Activated CD4-positive, alpha-beta memory T cell treated with anti-CD3 and anti-CD28 coated beads, Interleukin-2, amount 10 ng/mL, durations not matched to agents 7 days and 5 days (primary cell): ENCODE measurements at regions of chr12 and their contacts with region 1.

Region 1: DNA sequence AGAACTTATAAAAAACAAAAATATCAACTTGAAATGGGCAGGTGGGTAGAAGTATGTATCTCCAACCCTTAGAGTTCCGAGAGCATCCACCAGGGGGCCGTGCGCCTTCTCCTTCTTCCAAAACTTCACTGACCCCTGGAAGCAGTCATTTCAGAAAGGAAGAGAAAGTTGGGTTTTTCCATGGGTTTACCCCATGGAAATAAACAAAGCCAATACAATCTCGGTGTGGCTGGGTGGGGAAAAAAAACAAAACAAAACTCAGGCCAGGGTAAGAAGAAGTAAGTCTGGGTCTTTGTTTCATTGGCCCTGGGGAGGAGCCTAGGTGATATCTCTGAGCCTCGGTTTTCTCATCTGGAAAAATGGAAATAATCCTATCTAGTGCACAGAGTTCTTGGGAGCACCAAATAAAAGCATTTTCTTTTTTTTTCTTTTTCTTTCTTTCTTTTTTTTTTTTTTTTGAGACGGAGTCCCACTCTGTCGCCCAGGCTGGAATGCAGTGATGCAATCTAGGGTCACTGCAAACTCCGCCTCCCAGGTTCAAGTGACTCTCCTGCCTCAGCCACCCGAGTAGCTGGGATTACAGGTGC is 33.6 kb upstream of the HNF1A start:
- DNase-seq: peak; percentile 67
- H3K4me3 Mint-ChIP-seq: no peak overlapping the region
- H3K27ac Mint-ChIP-seq: no peak overlapping the region
- H3K4me1 Mint-ChIP-seq: peaks cover 4% of the 10 kb centered on the region
- H3K27me3 Mint-ChIP-seq: no peaks in the 10 kb centered on the region

Region 2: DNA sequence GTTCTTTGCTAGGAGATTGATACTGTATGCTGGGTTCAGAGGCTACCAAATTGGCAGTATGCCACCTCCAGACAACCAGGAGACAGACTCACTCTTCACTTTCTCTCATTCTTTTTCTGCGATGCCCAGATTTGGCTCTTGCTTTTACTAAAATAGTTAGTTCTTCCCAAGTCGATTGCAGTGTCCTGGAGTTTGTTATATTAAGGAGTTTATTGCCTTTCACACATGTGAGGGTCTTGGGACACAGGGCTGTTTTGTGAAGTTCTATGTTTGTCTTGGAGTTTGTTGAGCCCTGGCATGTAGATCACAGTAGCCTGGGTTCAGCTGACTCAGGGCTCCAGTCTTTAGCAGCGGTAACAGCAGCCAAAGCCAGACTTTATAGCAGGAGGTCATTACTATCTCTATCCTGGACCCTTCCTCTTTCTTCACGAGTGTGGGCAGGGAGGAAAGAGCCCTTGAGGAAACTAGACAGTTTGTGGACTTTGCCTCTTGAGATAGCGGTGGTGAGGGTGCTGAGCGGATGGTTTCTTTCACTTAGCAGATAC is 256.1 kb before region 1 on chr12:
- CTCF ChIA-PET with region 1: no interaction called
- POLR2A ChIA-PET with region 1: no interaction called
- DNase-seq: no peak
- H3K4me3 Mint-ChIP-seq: peak overlapping the region; percentile 82
- H3K27ac Mint-ChIP-seq: peak overlapping the region; percentile 56
- H3K4me1 Mint-ChIP-seq: peaks cover 73% of the 10 kb centered on the region
- H3K27me3 Mint-ChIP-seq: no peaks in the 10 kb centered on the region

Region 3: DNA sequence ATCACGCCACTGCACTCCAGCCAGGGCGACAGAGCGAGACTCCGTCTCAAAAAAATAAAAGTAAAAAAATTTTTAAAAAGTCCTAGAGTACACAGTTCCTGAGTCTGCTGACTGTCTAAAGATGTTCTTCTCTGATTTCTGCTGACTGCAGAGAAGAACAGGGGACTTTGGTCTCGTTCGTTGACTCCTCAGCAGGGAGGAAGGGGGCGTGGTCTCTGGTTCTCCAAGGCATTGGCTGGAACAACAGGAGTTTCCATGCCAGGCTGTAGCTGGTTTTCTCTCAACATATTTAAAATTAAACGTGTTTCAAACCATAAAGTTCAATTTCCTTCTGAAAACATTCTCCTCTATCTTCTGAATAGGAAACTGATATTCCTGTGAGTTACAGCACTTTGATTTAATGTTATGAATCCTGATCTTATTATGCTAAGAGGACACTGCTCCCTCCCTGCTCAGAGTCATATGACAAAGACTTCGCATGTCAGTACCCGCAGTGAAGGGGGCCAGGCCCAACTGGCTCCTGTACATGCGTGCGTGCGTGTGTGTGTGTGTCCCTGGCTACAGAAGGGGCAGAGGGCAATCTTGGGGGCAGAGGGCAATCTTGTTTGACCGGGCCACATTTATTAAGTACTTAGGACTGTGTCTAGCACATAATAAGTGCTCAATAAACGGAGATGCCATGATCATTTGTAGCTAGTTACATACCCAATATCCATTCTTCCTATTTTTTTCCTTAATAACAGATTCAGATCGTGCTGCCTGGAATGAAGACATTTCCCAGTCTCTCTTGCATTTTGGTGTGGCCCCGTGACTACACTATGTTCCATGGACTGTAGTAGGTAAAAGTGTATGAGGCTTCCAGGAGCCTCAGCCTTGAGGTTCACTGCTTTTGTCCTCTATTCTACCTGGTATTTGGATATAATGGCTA is 17.1 kb after region 1 on chr12:
- CTCF ChIA-PET with region 1: interaction called, 10 read pairs
- POLR2A ChIA-PET with region 1: no interaction called
- DNase-seq: no peak
- H3K4me3 Mint-ChIP-seq: no peak overlapping the region
- H3K27ac Mint-ChIP-seq: no peak overlapping the region
- H3K4me1 Mint-ChIP-seq: peaks cover 26% of the 10 kb centered on the region
- H3K27me3 Mint-ChIP-seq: no peaks in the 10 kb centered on the region

Region 4: GRCh38 chr12:120971299-120972179 is 26.8 kb after region 1 on chr12:
- CTCF ChIA-PET with region 1: interaction called, 29 read pairs
- POLR2A ChIA-PET with region 1: no interaction called
- DNase-seq: peak; percentile 28
- H3K4me3 Mint-ChIP-seq: no peak overlapping the region
- H3K27ac Mint-ChIP-seq: no peak overlapping the region
- H3K4me1 Mint-ChIP-seq: peaks cover 7% of the 10 kb centered on the region
- H3K27me3 Mint-ChIP-seq: peaks cover 1% of the 10 kb centered on the region